IMR-90 (cell line): ENCODE measurements at regions of chr15 and their contacts with region 1.

Region 1: GRCh38 chr15:38354315-38354929 is 99.5 kb upstream of the FAM98B start:
- DNase-seq: peak; percentile 75
- ATAC-seq: peak; percentile 72
- H3K4me3 ChIP-seq: no peak overlapping the region
- H3K27ac ChIP-seq: no peak overlapping the region
- H3K4me1 ChIP-seq: peaks cover 7% of the 10 kb centered on the region; the same call in 1 of the 2 replicates
- H3K27me3 ChIP-seq: no peaks in the 10 kb centered on the region
- CTCF ChIP-seq: peak; percentile 80
- POLR2A ChIP-seq: no peak
- RAD21 ChIP-seq: peak; percentile 85

Region 2: GRCh38 chr15:38072348-38073177 is 281.9 kb before region 1 on chr15:
- CTCF ChIA-PET with region 1: no interaction called
- POLR2A ChIA-PET with region 1: no interaction called
- dilution Hi-C with region 1: no loop called
- in situ Hi-C with region 1: no loop called
- intact Hi-C with region 1: loop called (anchors 5 kb)
- DNase-seq: peak; percentile 71
- ATAC-seq: peak; percentile 75
- H3K4me3 ChIP-seq: peak overlapping the region; percentile 28
- H3K27ac ChIP-seq: peak overlapping the region; percentile 85
- H3K4me1 ChIP-seq: peaks cover 9% of the 10 kb centered on the region
- H3K27me3 ChIP-seq: no peaks in the 10 kb centered on the region
- CTCF ChIP-seq: peak; percentile 25; the same call in 1 of the 2 replicates
- POLR2A ChIP-seq: no peak
- RAD21 ChIP-seq: peak; percentile 17; the same call in 1 of the 2 replicates

Region 3: GRCh38 chr15:38389924-38390542 is 35.6 kb after region 1 on chr15:
- CTCF ChIA-PET with region 1: no interaction called
- POLR2A ChIA-PET with region 1: no interaction called
- dilution Hi-C with region 1: no loop called
- in situ Hi-C with region 1: no loop called
- intact Hi-C with region 1: loop called (anchors 5 kb)
- DNase-seq: peak; percentile 58
- ATAC-seq: peak; percentile 87
- H3K4me3 ChIP-seq: no peak overlapping the region
- H3K27ac ChIP-seq: no peak overlapping the region
- H3K4me1 ChIP-seq: no peaks in the 10 kb centered on the region
- H3K27me3 ChIP-seq: no peaks in the 10 kb centered on the region
- CTCF ChIP-seq: peak; percentile 71
- POLR2A ChIP-seq: no peak
- RAD21 ChIP-seq: peak; percentile 64

Region 4: GRCh38 chr15:38414357-38414756 is 59.9 kb after region 1 on chr15:
- CTCF ChIA-PET with region 1: no interaction called
- POLR2A ChIA-PET with region 1: no interaction called
- dilution Hi-C with region 1: no loop called
- in situ Hi-C with region 1: no loop called
- intact Hi-C with region 1: loop called (anchors 1 kb)
- DNase-seq: peak; percentile 75
- ATAC-seq: peak; percentile 100
- H3K4me3 ChIP-seq: no peak overlapping the region
- H3K27ac ChIP-seq: no peak overlapping the region
- H3K4me1 ChIP-seq: no peaks in the 10 kb centered on the region
- H3K27me3 ChIP-seq: peaks cover 32% of the 10 kb centered on the region
- CTCF ChIP-seq: peak; percentile 86
- POLR2A ChIP-seq: 0 out of 2 replicates have a peak, but pooled peaks have one; percentile 41
- RAD21 ChIP-seq: peak; percentile 95

Region 5: GRCh38 chr15:38427380-38427779 is 73.0 kb after region 1 on chr15:
- CTCF ChIA-PET with region 1: no interaction called
- POLR2A ChIA-PET with region 1: no interaction called
- dilution Hi-C with region 1: no loop called
- in situ Hi-C with region 1: no loop called
- intact Hi-C with region 1: no loop called
- DNase-seq: no peak
- ATAC-seq: no peak
- H3K4me3 ChIP-seq: no peak overlapping the region
- H3K27ac ChIP-seq: no peak overlapping the region
- H3K4me1 ChIP-seq: no peaks in the 10 kb centered on the region
- H3K27me3 ChIP-seq: peaks cover 35% of the 10 kb centered on the region
- CTCF ChIP-seq: no peak
- POLR2A ChIP-seq: no peak
- RAD21 ChIP-seq: no peak